ENCODE measurements at regions of chr1 and their contacts with region 1.

Region 1: GRCh38 chr1:60281360-60281932 is 207.9 kb upstream of the C1orf87 start:
- DNase-seq: peak; percentile 86
- H3K27ac ChIP-seq: no peak overlapping the region
- CTCF ChIP-seq: peak; percentile 83

Region 2: GRCh38 chr1:60390593-60391282 is 109.3 kb after region 1 on chr1:
- CTCF ChIA-PET with region 1: no interaction called
- POLR2A ChIA-PET with region 1: no interaction called
- DNase-seq: no peak
- H3K27ac ChIP-seq: no peak overlapping the region
- CTCF ChIP-seq: no peak

Region 3: DNA sequence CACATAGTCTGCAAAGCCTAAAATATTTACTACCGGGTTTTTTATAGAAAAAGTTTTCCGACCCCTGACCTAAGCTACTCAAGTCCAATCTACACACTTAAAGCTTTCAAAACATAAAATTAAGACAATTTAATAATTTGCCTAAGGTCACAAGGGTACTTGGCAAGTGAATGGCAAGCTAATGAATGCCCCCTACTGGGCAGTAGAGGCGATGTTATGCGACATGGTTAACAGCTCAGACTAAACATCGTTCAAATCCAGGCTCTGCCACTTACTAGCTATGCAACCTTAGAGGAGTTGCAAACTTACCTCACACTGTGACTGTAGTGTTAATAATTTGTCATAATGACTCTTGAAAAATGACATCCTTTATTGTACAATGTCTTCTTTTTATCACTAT is 483.8 kb after region 1 on chr1:
- CTCF ChIA-PET with region 1: interaction called, 19 read pairs
- POLR2A ChIA-PET with region 1: no interaction called
- DNase-seq: peak; percentile 20
- H3K27ac ChIP-seq: no peak overlapping the region
- CTCF ChIP-seq: peak; percentile 36; the same call in 1 of the 2 replicates